ENCODE measurements at regions of chr12 and their contacts with region 1.

Region 1: DNA sequence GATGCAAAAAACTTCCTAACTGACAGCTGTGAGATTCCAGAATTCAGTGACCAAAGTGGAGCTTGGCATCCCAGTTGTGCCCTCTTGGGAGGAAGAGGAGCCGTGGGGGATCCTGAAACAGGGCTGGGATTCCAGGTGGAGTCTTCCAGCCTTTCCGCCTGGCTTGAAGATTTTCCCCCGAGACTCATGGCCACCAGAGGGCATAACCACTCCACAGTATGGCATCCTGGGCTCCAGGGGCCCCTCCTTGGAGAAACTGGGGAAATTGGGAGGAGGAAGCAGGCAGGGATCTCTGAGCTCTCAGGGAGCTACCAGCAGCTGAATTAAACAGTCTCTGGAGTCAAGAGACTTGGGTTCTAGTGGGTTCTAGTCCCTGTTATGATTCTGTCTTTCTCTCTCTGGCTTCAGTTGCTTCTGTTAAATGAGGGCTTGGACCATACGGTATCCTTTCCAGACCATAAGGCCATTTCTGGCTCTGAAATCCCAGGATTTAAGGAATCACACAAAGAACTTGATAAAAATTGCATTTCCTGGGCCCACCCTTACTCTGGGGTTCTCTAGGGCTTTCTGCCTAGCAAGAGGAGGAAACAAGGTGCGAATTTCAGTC is 2.6 kb upstream of the TAMALIN start:
- DNase-seq: no peak
- H3K4me3 ChIP-seq: no peak overlapping the region
- H3K27ac ChIP-seq: no peak overlapping the region
- H3K4me1 ChIP-seq: peaks cover 22 to 50% (median 41%) of the 10 kb centered on the region in 4 donors
- H3K27me3 ChIP-seq: peaks cover 2 to 39% (median 14%) of the 10 kb centered on the region in 4 donors
- CTCF ChIP-seq: peak; percentile 69 to 81 (median 77)
- EP300 ChIP-seq: no peak
- POLR2A ChIP-seq: no peak

Region 2: GRCh38 chr12:52023182-52023975 is 19.2 kb after region 1 on chr12:
- intact Hi-C with region 1: loop called (anchors 2 kb)
- DNase-seq: no peak
- H3K4me3 ChIP-seq: peak overlapping the region; percentile 63 to 70 (median 64)
- H3K27ac ChIP-seq: peak overlapping the region; percentile 48 to 92 (median 88)
- H3K4me1 ChIP-seq: peaks cover 43 to 65% (median 56%) of the 10 kb centered on the region in 4 donors
- H3K27me3 ChIP-seq: no peaks in the 10 kb centered on the region
- CTCF ChIP-seq: peak; percentile 95 to 99 (median 99)
- EP300 ChIP-seq: no peak
- POLR2A ChIP-seq: no peak

Region 3: GRCh38 chr12:52082988-52083637 is 79.0 kb after region 1 on chr12:
- intact Hi-C with region 1: loop called (anchors 1 kb)
- DNase-seq: no peak
- H3K4me3 ChIP-seq: no peak overlapping the region
- H3K27ac ChIP-seq: peak overlapping the region; percentile 68 to 79 (median 74)
- H3K4me1 ChIP-seq: peaks cover 30 to 46% (median 43%) of the 10 kb centered on the region in 4 donors
- H3K27me3 ChIP-seq: peaks cover 0 to 18% (median 0%) of the 10 kb centered on the region in 4 donors
- CTCF ChIP-seq: peak; percentile 95 to 98 (median 97)
- EP300 ChIP-seq: no peak
- POLR2A ChIP-seq: no peak

Measured in esophagus muscularis mucosa (tissue), 4 donors.